HCT116 (cell line): ENCODE measurements at regions of chr15 and their contacts with region 1.

Region 1: DNA sequence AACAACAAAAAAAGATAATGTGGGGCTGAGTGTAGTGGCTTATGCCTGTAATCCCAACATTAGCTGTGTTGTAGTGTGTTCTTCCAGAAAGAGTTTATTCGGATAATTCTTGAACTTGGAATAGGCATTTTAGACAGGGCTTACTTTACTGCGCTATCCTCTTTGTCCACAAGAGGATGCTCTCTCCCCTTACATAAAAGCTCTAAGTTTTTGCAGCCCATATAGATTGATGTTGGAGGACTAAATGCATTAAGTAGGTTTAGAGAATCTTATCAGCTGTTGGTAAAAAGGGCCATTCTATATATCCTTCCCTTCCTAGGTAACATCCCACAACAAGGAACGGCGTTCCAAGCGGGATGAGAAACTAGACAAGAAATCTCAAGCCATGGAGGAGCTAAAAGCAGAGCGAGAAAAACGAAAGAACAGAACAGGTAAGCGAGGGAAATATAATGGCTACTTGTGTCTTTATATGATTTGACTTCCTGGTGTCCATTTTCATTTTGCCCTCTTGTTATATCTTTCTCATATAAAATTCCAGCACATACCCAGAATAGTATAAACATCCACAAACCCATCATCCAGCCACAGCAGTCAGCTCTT is 27.8 kb upstream of the ITPKA start:
- DNase-seq: peak; percentile 45
- ATAC-seq: peak; percentile 80
- H3K4me3 ChIP-seq: no peak overlapping the region
- H3K27ac ChIP-seq: no peak overlapping the region
- H3K4me1 ChIP-seq: no peaks in the 10 kb centered on the region
- H3K27me3 ChIP-seq: no peaks in the 10 kb centered on the region
- CTCF ChIP-seq: peak; percentile 84 to 99 (median 98)
- POLR2A ChIP-seq: no peak
- RAD21 ChIP-seq: peak; percentile 90

Region 2: GRCh38 chr15:41506796-41507341 is 40.9 kb after region 1 on chr15:
- CTCF ChIA-PET with region 1: interaction called, 28 read pairs
- POLR2A ChIA-PET with region 1: no interaction called
- RAD21 ChIA-PET with region 1: interaction called, 4 read pairs
- intact Hi-C with region 1: loop called (anchors 1 kb)
- DNase-seq: no peak
- ATAC-seq: peak; percentile 85
- H3K4me3 ChIP-seq: no peak overlapping the region
- H3K27ac ChIP-seq: no peak overlapping the region
- H3K4me1 ChIP-seq: peaks cover 13 to 21% of the 10 kb centered on the region in 2 experiments
- H3K27me3 ChIP-seq: no peaks in the 10 kb centered on the region
- CTCF ChIP-seq: peak; percentile 41 to 53 (median 52); a peak in 4 of 6 replicates
- POLR2A ChIP-seq: no peak
- RAD21 ChIP-seq: no peak; the same call in none of the 2 replicates

Region 3: GRCh38 chr15:41603941-41604911 is 138.3 kb after region 1 on chr15:
- CTCF ChIA-PET with region 1: interaction called, 15 read pairs
- POLR2A ChIA-PET with region 1: no interaction called
- RAD21 ChIA-PET with region 1: interaction called, 3 to 6 read pairs
- intact Hi-C with region 1: no loop called
- DNase-seq: peak; percentile 70
- ATAC-seq: peak; percentile 97
- H3K4me3 ChIP-seq: peak overlapping the region; percentile 33 to 44
- H3K27ac ChIP-seq: no peak overlapping the region
- H3K4me1 ChIP-seq: peaks cover 4 to 32% of the 10 kb centered on the region in 2 experiments; a peak in 3 of 4 replicates
- H3K27me3 ChIP-seq: no peaks in the 10 kb centered on the region
- CTCF ChIP-seq: peak; percentile 76 to 90 (median 83)
- POLR2A ChIP-seq: no peak
- RAD21 ChIP-seq: peak; percentile 75